Caco-2 (cell line): ENCODE measurements at regions of chr6 and their contacts with region 1.

Region 1: GRCh38 chr6:45880159-45880558 is 135.5 kb downstream of the CLIC5 start:
- DNase-seq: peak; percentile 88 to 93
- H3K4me3 ChIP-seq: no peak overlapping the region
- H3K4me3 Mint-ChIP-seq: peak overlapping the region; percentile 50
- H3K27ac Mint-ChIP-seq: peak overlapping the region; percentile 96
- H3K4me1 ChIP-seq: peaks cover 41% of the 10 kb centered on the region
- H3K4me1 Mint-ChIP-seq: peaks cover 23% of the 10 kb centered on the region
- H3K27me3 ChIP-seq: no peaks in the 10 kb centered on the region
- H3K27me3 Mint-ChIP-seq: no peaks in the 10 kb centered on the region
- CTCF ChIP-seq: peak in 1 of 2 experiments; percentile 35

Region 2: GRCh38 chr6:45843848-45844521 is 36.2 kb before region 1 on chr6:
- CTCF ChIA-PET with region 1: no interaction called
- POLR2A ChIA-PET with region 1: interaction called, 9 read pairs
- intact Hi-C with region 1: loop called (anchors 1 kb)
- DNase-seq: no peak
- H3K4me3 ChIP-seq: no peak overlapping the region
- H3K4me3 Mint-ChIP-seq: no peak overlapping the region
- H3K27ac Mint-ChIP-seq: peak overlapping the region; percentile 11
- H3K4me1 ChIP-seq: peaks cover 21% of the 10 kb centered on the region
- H3K4me1 Mint-ChIP-seq: peaks cover 9% of the 10 kb centered on the region
- H3K27me3 ChIP-seq: no peaks in the 10 kb centered on the region
- H3K27me3 Mint-ChIP-seq: no peaks in the 10 kb centered on the region
- CTCF ChIP-seq: no peak

Region 3: DNA sequence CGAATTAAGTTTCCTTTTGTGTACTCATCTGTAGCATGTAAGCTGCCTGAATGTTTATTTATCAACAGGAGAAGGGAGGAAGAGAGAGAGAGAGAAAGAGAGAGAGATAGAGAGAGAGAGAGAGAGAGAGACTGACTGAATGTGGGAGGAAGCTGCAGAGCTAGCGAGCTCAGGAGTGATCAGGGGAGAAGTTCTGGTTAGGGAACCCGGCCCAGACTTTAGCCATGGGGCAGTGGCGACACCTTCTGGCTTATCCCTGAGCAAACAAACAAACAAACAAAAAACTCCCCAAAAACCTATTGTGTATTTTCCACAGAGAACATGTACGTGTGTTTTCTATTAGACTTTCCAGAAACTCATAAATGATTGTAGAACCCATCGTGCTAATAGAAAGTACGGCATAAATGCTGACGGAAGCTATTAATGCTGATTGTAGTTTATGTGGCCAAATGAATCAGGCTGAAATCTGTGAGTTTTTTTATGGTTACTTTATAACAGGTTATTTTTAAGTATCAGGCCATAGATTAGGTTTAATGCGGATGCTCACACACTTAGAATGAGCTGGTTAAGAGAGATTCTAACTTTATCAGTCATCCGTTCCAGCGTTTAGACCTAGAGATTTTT is 42.7 kb after region 1 on chr6:
- CTCF ChIA-PET with region 1: interaction called, 14 read pairs
- POLR2A ChIA-PET with region 1: no interaction called
- intact Hi-C with region 1: loop called (anchors 2 kb)
- DNase-seq: peak; percentile 43 to 64
- H3K4me3 ChIP-seq: no peak overlapping the region
- H3K4me3 Mint-ChIP-seq: no peak overlapping the region
- H3K27ac Mint-ChIP-seq: no peak overlapping the region
- H3K4me1 ChIP-seq: peaks cover 4% of the 10 kb centered on the region; the same call in 1 of the 2 replicates
- H3K4me1 Mint-ChIP-seq: peaks cover 6% of the 10 kb centered on the region
- H3K27me3 ChIP-seq: no peaks in the 10 kb centered on the region
- H3K27me3 Mint-ChIP-seq: no peaks in the 10 kb centered on the region
- CTCF ChIP-seq: peak; percentile 35 to 58

Region 4: GRCh38 chr6:45951321-45952167 is 71.4 kb after region 1 on chr6:
- CTCF ChIA-PET with region 1: no interaction called
- POLR2A ChIA-PET with region 1: no interaction called
- intact Hi-C with region 1: loop called (anchors 1 kb)
- DNase-seq: peak; percentile 47 to 48
- H3K4me3 ChIP-seq: no peak overlapping the region
- H3K4me3 Mint-ChIP-seq: peak overlapping the region; percentile 61
- H3K27ac Mint-ChIP-seq: peak overlapping the region; percentile 84
- H3K4me1 ChIP-seq: peaks cover 32% of the 10 kb centered on the region
- H3K4me1 Mint-ChIP-seq: peaks cover 33% of the 10 kb centered on the region
- H3K27me3 ChIP-seq: no peaks in the 10 kb centered on the region
- H3K27me3 Mint-ChIP-seq: no peaks in the 10 kb centered on the region
- CTCF ChIP-seq: no peak

Region 5: GRCh38 chr6:45991189-45991588 is 111.0 kb after region 1 on chr6:
- CTCF ChIA-PET with region 1: no interaction called
- POLR2A ChIA-PET with region 1: no interaction called
- intact Hi-C with region 1: no loop called
- DNase-seq: no peak
- H3K4me3 ChIP-seq: no peak overlapping the region
- H3K4me3 Mint-ChIP-seq: no peak overlapping the region
- H3K27ac Mint-ChIP-seq: no peak overlapping the region
- H3K4me1 ChIP-seq: peaks cover 36% of the 10 kb centered on the region
- H3K4me1 Mint-ChIP-seq: peaks cover 24% of the 10 kb centered on the region
- H3K27me3 ChIP-seq: no peaks in the 10 kb centered on the region
- H3K27me3 Mint-ChIP-seq: no peaks in the 10 kb centered on the region
- CTCF ChIP-seq: peak; percentile 22 to 26